ENCODE measurements at regions of chr15 and their contacts with region 1.

Region 1: GRCh38 chr15:33251362-33251761 is 56.8 kb upstream of the FMN1 start:
- DNase-seq: no peak
- ATAC-seq: no peak
- H3K4me3 ChIP-seq: no peak overlapping the region
- H3K4me3 Mint-ChIP-seq: no peak overlapping the region
- H3K27ac ChIP-seq: no peak overlapping the region
- H3K27ac Mint-ChIP-seq: no peak overlapping the region
- H3K4me1 ChIP-seq: no peaks in the 10 kb centered on the region
- H3K4me1 Mint-ChIP-seq: no peaks in the 10 kb centered on the region
- H3K27me3 ChIP-seq: peaks cover 0 to 9% of the 10 kb centered on the region in 2 experiments
- H3K27me3 Mint-ChIP-seq: peaks cover 10% of the 10 kb centered on the region
- CTCF ChIP-seq: no peak

Region 2: DNA sequence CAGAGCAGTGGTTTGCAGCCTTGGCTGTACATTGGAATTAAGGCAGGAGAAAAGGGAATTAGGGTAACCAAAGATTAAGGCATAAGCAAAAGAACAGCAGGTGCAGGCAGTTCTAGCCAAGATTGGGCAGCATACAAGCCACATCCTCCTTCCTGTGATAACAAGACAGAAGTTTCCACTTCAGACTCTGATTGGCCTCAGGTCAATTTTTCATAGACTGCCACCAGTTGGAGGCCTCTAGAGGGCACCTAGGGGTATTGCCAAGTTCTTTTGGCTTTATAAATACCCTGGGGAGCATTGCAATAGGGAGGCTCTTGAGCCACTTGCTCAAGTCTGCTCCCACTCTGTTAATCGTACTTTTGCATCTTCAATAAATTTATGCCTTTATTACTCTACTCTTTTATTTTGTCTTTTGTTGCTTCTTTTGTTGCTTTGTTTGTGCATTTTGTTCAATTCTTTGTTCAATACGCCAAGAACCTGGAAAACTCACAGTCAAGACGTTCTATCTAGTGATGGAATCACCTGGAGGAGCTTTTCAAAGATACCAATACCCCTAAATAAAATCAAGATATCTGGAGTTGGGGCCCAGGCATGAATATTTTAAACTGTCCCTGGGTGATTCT is 24.7 kb before region 1 on chr15:
- CTCF ChIA-PET with region 1: no interaction called
- POLR2A ChIA-PET with region 1: no interaction called
- intact Hi-C with region 1: no loop called
- DNase-seq: peak; percentile 24 to 86 (median 57)
- ATAC-seq: peak; percentile 99
- H3K4me3 ChIP-seq: no peak overlapping the region
- H3K4me3 Mint-ChIP-seq: peak overlapping the region; percentile 26
- H3K27ac ChIP-seq: peak overlapping the region in 1 of 2 donors; percentile 32
- H3K27ac Mint-ChIP-seq: peak overlapping the region; percentile 77
- H3K4me1 ChIP-seq: peaks cover 13% of the 10 kb centered on the region
- H3K4me1 Mint-ChIP-seq: peaks cover 26% of the 10 kb centered on the region
- H3K27me3 ChIP-seq: no peaks in the 10 kb centered on the region
- H3K27me3 Mint-ChIP-seq: no peaks in the 10 kb centered on the region
- CTCF ChIP-seq: peak; percentile 71

Region 3: GRCh38 chr15:33262306-33262705 is 10.9 kb after region 1 on chr15:
- CTCF ChIA-PET with region 1: no interaction called
- POLR2A ChIA-PET with region 1: no interaction called
- intact Hi-C with region 1: loop called in 1 of 2 experiments (anchors 2 kb)
- DNase-seq: no peak
- ATAC-seq: no peak
- H3K4me3 ChIP-seq: no peak overlapping the region
- H3K4me3 Mint-ChIP-seq: no peak overlapping the region
- H3K27ac ChIP-seq: no peak overlapping the region
- H3K27ac Mint-ChIP-seq: no peak overlapping the region
- H3K4me1 ChIP-seq: no peaks in the 10 kb centered on the region
- H3K4me1 Mint-ChIP-seq: no peaks in the 10 kb centered on the region
- H3K27me3 ChIP-seq: no peaks in the 10 kb centered on the region
- H3K27me3 Mint-ChIP-seq: no peaks in the 10 kb centered on the region
- CTCF ChIP-seq: no peak

Region 4: DNA sequence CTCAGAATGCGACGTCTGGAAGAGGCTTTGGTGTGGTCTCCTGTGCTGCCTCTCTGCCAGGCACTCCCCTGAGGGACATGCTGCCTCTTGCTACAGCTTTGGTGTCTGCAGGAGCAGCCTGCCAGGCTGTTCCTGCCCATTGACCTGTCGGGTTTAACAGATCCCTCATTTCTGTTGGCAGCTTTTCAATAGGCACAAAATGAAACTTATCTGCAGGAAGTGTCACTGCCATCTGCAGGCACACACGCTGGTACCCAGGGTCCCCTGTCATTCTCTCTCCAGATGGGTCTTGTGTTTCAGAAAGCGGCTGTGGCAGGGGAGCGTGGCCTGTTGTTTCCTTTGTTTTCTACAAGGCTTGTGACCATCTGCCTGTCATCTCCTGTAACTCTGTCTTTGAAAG is 388.6 kb after region 1 on chr15:
- CTCF ChIA-PET with region 1: no interaction called
- POLR2A ChIA-PET with region 1: no interaction called
- intact Hi-C with region 1: no loop called
- DNase-seq: no peak
- ATAC-seq: no peak
- H3K4me3 ChIP-seq: no peak overlapping the region
- H3K4me3 Mint-ChIP-seq: no peak overlapping the region
- H3K27ac ChIP-seq: no peak overlapping the region
- H3K27ac Mint-ChIP-seq: no peak overlapping the region
- H3K4me1 ChIP-seq: no peaks in the 10 kb centered on the region
- H3K4me1 Mint-ChIP-seq: no peaks in the 10 kb centered on the region
- H3K27me3 ChIP-seq: peaks cover 8% of the 10 kb centered on the region in 2 experiments
- H3K27me3 Mint-ChIP-seq: peaks cover 24% of the 10 kb centered on the region
- CTCF ChIP-seq: no peak

Measured in CD4-positive, alpha-beta T cell (primary cell).